ENCODE measurements at regions of chr1 and their contacts with region 1.

Region 1: GRCh38 chr1:28877132-28877781 is 37.1 kb upstream of the EPB41 start:
- DNase-seq: peak; percentile 64 to 80 (median 74)
- H3K4me3 ChIP-seq: no peak overlapping the region
- H3K4me3 Mint-ChIP-seq: no peak overlapping the region
- H3K27ac ChIP-seq: no peak overlapping the region
- H3K27ac Mint-ChIP-seq: peak overlapping the region in 1 of 7 donors; percentile 22
- H3K4me1 ChIP-seq: peaks cover 14 to 17% of the 10 kb centered on the region in 2 donors
- H3K4me1 Mint-ChIP-seq: peaks cover 19% of the 10 kb centered on the region
- H3K27me3 ChIP-seq: no peaks in the 10 kb centered on the region
- H3K27me3 Mint-ChIP-seq: peaks cover 2 to 5% (median 3%) of the 10 kb centered on the region in 3 donors
- CTCF ChIP-seq: peak; percentile 94

Region 2: GRCh38 chr1:28359592-28360239 is 517.5 kb before region 1 on chr1:
- intact Hi-C with region 1: loop called in 1 of 2 experiments (anchors 10 kb)
- DNase-seq: peak; percentile 44 to 72 (median 60)
- H3K4me3 ChIP-seq: no peak overlapping the region
- H3K4me3 Mint-ChIP-seq: no peak overlapping the region
- H3K27ac ChIP-seq: no peak overlapping the region
- H3K27ac Mint-ChIP-seq: no peak overlapping the region
- H3K4me1 ChIP-seq: no peaks in the 10 kb centered on the region
- H3K4me1 Mint-ChIP-seq: no peaks in the 10 kb centered on the region
- H3K27me3 ChIP-seq: no peaks in the 10 kb centered on the region
- H3K27me3 Mint-ChIP-seq: peaks cover 0 to 3% (median 1%) of the 10 kb centered on the region in 3 donors
- CTCF ChIP-seq: peak; percentile 85

Region 3: DNA sequence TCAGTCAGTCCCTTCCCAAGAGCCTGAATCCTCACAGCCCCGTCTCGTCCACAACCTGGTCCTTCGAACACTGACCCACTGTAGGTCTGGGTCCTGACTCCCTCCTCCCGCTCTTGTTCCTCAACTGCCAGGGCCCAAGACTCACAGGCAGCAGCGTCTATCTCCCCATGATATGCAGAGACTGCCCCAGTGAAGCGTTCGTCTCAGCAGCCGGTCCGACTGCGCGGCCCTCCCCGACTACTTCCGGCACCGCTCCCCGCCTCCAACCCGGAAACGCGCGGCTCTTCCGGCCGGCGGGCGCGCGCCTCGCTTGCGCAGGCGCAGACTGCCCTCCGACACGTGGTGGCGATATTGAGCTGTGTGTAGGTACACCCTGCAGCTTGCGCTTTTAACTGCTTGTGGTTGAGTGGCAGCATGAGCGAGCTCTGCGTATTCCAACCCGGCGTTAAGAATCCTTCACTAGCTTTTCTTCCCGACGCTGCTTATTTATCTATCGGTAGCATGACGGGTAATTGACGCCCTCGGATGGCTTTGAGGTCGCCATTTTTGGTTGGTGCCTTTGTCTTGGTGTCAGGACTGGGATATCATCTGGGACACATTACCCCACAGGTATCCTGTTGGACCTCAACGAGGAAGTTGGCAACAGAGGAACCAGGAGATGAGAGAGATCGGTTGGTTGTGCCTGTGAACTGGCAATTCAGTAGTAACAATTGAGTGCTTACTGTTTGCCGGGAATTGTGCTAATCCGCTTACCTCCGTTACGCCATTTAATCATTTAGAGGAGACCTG is 234.2 kb before region 1 on chr1 and contains the start of gene TAF12:
- intact Hi-C with region 1: loop called (anchors 10 kb)
- DNase-seq: peak; percentile 92 to 95 (median 94)
- H3K4me3 ChIP-seq: peak within 1 kb of the TSS; percentile 63 to 96 (median 68)
- H3K4me3 Mint-ChIP-seq: peak within 1 kb of the TSS; percentile 100
- H3K27ac ChIP-seq: peak within 1 kb of the TSS; percentile 77 to 97
- H3K27ac Mint-ChIP-seq: peak within 1 kb of the TSS; percentile 98 to 99 (median 99)
- H3K4me1 ChIP-seq: peaks cover 40 to 44% of the 10 kb centered on the region in 2 donors
- H3K4me1 Mint-ChIP-seq: peaks cover 42% of the 10 kb centered on the region
- H3K27me3 ChIP-seq: no peaks in the 10 kb centered on the region
- H3K27me3 Mint-ChIP-seq: peaks cover 0 to 2% (median 0%) of the 10 kb centered on the region in 3 donors
- CTCF ChIP-seq: no peak
- polyA plus RNA-seq, gene TAF12: 36.7 to 53.7 (median 53.7) TPM

Region 4: DNA sequence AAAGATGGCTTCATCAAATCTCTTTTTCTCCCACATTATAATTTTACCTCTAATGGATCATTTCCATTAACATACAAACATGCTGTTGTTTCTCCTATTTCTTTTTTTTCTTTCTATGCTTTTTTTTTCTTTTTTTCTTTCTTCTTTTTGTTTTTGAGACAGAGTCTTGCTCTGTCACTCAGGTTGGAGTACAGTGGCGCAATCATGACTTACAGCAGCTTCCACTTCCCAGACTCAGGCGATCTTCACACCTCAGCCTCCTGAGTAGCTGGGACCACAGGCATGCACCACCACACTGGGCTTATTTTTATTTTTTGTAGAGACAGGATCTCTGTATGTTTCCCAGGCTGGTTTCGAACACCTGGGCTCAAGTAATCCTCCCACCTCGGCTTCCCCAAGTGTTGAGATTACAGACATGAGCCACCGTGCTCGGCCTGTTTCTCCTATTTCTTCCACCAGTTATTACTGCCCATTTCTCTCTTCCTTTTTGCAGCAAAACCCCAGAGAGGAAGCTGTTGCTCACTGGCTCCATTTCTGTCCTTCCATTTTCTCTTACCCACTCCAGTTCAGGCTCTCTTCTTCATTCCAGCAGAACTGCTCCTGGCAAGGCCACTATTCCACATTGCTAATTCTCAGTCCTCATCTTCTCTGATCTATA is 97.4 kb before region 1 on chr1:
- intact Hi-C with region 1: loop called (anchors 2 to 5 kb)
- DNase-seq: peak; percentile 20 to 37 (median 35)
- H3K4me3 ChIP-seq: peak overlapping the region in 1 of 3 experiments; percentile 40
- H3K4me3 Mint-ChIP-seq: peak overlapping the region; percentile 7 to 67
- H3K27ac ChIP-seq: peak overlapping the region; percentile 56 to 80
- H3K27ac Mint-ChIP-seq: peak overlapping the region; percentile 54 to 91 (median 78)
- H3K4me1 ChIP-seq: peaks cover 25 to 29% of the 10 kb centered on the region in 2 donors
- H3K4me1 Mint-ChIP-seq: peaks cover 39% of the 10 kb centered on the region
- H3K27me3 ChIP-seq: no peaks in the 10 kb centered on the region
- H3K27me3 Mint-ChIP-seq: peaks cover 0 to 2% (median 0%) of the 10 kb centered on the region in 3 donors
- CTCF ChIP-seq: no peak

Region 5: GRCh38 chr1:28965271-28965870 is 88.1 kb after region 1 on chr1:
- intact Hi-C with region 1: no loop called
- DNase-seq: no peak
- H3K4me3 ChIP-seq: no peak overlapping the region
- H3K4me3 Mint-ChIP-seq: no peak overlapping the region
- H3K27ac ChIP-seq: no peak overlapping the region
- H3K27ac Mint-ChIP-seq: no peak overlapping the region
- H3K4me1 ChIP-seq: no peaks in the 10 kb centered on the region
- H3K4me1 Mint-ChIP-seq: peaks cover 2% of the 10 kb centered on the region
- H3K27me3 ChIP-seq: no peaks in the 10 kb centered on the region
- H3K27me3 Mint-ChIP-seq: peaks cover 0 to 1% (median 0%) of the 10 kb centered on the region in 3 donors
- CTCF ChIP-seq: no peak

Region 6: GRCh38 chr1:29202584-29203340 is 325.5 kb after region 1 on chr1:
- intact Hi-C with region 1: loop called (anchors 1 to 2 kb)
- DNase-seq: peak; percentile 87 to 92 (median 92)
- H3K4me3 ChIP-seq: peak overlapping the region in 1 of 3 experiments; percentile 34
- H3K4me3 Mint-ChIP-seq: peak overlapping the region in 1 of 2 donors; percentile 51
- H3K27ac ChIP-seq: peak overlapping the region; percentile 57 to 76
- H3K27ac Mint-ChIP-seq: peak overlapping the region; percentile 78 to 95 (median 85)
- H3K4me1 ChIP-seq: peaks cover 19 to 22% of the 10 kb centered on the region in 2 donors
- H3K4me1 Mint-ChIP-seq: peaks cover 20% of the 10 kb centered on the region
- H3K27me3 ChIP-seq: no peaks in the 10 kb centered on the region
- H3K27me3 Mint-ChIP-seq: no peaks in the 10 kb centered on the region
- CTCF ChIP-seq: peak; percentile 88